ENCODE measurements at regions of chr6 and their contacts with region 1.

Region 1: DNA sequence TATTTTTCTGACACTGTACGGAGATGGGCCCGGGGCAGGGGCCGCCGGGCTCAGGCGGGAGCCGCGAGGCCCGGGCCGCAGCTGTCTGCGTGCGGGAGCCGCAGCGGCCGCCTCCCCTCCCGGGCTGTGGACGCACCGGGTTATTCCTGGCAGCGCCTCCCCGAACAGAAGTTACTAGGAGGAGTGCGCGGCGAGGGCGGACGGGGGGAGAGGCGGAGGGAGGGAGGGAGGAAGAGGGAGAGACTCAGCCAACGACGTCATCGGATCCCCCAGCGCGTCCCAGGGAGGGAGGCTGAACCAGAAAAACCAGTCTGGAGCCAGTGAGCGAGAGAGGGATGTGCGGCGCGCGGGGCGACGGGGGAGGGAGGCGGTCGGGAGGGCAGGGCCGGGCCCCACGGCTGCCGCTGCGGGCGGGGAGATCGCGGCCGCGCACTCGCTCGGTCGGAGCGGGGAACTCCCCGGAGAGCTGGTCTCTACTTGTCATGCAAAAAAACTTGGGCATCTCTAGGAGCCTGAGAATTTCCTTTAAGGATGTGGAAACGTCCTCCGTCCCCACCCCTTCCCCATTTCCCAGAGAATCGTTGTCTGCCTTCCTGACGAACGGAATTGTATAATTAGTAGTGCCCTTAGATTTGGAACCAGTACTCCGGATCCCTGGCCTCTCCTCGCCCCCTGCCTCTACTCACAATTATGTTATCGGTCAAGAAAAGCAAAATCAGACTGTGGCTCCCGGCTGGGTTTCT is 1.4 kb upstream of the HIVEP2 start:
- DNase-seq: peak; percentile 96
- H3K4me3 Mint-ChIP-seq: peak overlapping the region; percentile 96
- H3K27ac Mint-ChIP-seq: peak overlapping the region; percentile 99
- H3K4me1 Mint-ChIP-seq: peaks cover 28% of the 10 kb centered on the region
- H3K27me3 Mint-ChIP-seq: peaks cover 2% of the 10 kb centered on the region

Region 2: DNA sequence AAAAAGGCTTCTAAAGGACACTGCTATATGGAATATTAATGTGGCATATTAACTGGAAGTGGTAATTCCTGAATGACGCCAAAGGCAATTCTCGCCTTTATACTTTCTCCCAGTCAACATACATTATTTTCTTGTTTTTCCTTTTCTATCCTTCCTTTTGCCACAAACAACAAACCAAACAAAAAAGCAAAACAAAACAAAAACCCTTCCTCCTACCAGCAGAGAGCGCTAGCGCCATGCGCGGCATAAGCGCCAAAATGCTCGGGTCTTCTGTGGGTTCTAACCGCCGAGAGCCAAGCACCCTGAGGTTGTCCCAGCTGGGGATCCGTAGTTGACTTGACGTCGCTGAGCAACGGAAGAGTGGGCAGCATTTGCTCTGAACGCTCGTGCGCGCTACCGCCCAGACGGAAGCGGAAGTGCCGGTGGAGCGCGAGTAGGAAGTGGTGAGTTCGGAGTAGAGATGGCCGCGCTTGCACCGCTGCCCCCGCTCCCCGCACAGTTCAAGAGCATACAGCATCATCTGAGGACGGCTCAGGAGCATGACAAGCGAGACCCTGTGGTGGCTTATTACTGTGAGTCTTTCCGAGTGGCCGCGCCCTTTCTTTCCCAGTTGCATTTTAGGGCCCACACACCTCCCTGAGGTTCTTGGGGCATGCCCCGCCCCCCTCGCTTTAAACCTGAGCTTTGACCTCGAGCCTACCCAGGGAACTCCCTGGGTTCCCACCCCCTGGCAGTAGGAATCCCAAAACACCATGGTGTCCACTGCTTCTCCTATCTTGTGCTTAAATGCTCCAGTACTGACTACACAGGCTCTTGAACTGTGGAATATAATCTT is 799.3 kb before region 1 on chr6 and contains the starts of genes NMBR and VTA1:
- CTCF ChIA-PET with region 1: no interaction called
- POLR2A ChIA-PET with region 1: no interaction called
- intact Hi-C with region 1: loop called (anchors 2 kb)
- DNase-seq: peak; percentile 98
- H3K4me3 Mint-ChIP-seq: peak within 1 kb of the TSS; percentile 96
- H3K27ac Mint-ChIP-seq: peak within 1 kb of the TSS; percentile 70
- H3K4me1 Mint-ChIP-seq: peaks cover 51% of the 10 kb centered on the region
- H3K27me3 Mint-ChIP-seq: no peaks in the 10 kb centered on the region
- total RNA-seq, gene NMBR: not detected
- total RNA-seq, gene VTA1: 43.5 to 47.4 TPM

Region 3: DNA sequence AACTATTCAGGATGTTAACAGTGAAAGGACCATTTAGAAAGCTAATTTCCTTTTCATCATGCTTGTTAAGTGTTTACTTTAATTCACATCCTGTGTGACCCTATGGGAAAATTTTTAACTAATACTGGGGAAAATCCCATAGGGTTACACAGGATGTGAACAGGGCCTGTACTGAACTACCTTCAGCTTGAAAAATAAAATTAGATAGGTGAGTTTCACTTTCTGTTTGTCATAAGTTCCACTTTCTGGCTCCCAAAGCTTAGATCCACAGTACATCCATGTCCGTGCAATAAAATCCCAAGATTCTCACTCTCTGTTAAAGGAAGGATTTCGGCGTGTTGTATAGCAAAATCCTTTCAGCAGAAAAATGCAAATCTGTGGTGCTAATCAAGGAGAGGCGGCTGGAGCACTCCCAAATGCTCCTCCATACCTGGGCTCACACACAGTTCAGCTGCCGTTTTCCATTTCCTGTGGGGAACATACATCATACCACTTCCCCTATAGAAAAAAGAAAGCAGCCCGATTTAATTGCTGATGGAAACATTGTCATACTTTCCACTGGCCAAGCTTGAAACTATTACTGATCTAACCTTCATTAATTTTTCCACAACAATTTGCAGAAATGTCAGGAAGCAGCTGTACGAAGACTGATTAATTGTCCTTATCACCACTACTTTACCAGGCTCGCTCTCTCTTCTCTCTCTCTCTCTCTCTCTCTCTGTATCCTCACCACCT is 126.6 kb before region 1 on chr6:
- CTCF ChIA-PET with region 1: interaction called, 3 read pairs
- POLR2A ChIA-PET with region 1: interaction called, 26 read pairs
- intact Hi-C with region 1: loop called (anchors 1 kb)
- DNase-seq: peak; percentile 63
- H3K4me3 Mint-ChIP-seq: peak overlapping the region; percentile 79
- H3K27ac Mint-ChIP-seq: peak overlapping the region; percentile 97
- H3K4me1 Mint-ChIP-seq: peaks cover 77% of the 10 kb centered on the region
- H3K27me3 Mint-ChIP-seq: peaks cover 2% of the 10 kb centered on the region

Region 4: GRCh38 chr6:142902636-142903053 is 43.7 kb before region 1 on chr6:
- CTCF ChIA-PET with region 1: interaction called, 4 read pairs
- POLR2A ChIA-PET with region 1: interaction called, 12 read pairs
- intact Hi-C with region 1: loop called (anchors 1 kb)
- DNase-seq: peak; percentile 87
- H3K4me3 Mint-ChIP-seq: peak overlapping the region; percentile 56
- H3K27ac Mint-ChIP-seq: peak overlapping the region; percentile 87
- H3K4me1 Mint-ChIP-seq: peaks cover 59% of the 10 kb centered on the region
- H3K27me3 Mint-ChIP-seq: no peaks in the 10 kb centered on the region

Region 5: GRCh38 chr6:143060354-143060805 is 114.0 kb after region 1 on chr6:
- CTCF ChIA-PET with region 1: no interaction called
- POLR2A ChIA-PET with region 1: no interaction called
- intact Hi-C with region 1: loop called (anchors 1 kb)
- DNase-seq: peak; percentile 83
- H3K4me3 Mint-ChIP-seq: peak overlapping the region; percentile 89
- H3K27ac Mint-ChIP-seq: peak overlapping the region; percentile 92
- H3K4me1 Mint-ChIP-seq: peaks cover 23% of the 10 kb centered on the region
- H3K27me3 Mint-ChIP-seq: no peaks in the 10 kb centered on the region

Region 6: DNA sequence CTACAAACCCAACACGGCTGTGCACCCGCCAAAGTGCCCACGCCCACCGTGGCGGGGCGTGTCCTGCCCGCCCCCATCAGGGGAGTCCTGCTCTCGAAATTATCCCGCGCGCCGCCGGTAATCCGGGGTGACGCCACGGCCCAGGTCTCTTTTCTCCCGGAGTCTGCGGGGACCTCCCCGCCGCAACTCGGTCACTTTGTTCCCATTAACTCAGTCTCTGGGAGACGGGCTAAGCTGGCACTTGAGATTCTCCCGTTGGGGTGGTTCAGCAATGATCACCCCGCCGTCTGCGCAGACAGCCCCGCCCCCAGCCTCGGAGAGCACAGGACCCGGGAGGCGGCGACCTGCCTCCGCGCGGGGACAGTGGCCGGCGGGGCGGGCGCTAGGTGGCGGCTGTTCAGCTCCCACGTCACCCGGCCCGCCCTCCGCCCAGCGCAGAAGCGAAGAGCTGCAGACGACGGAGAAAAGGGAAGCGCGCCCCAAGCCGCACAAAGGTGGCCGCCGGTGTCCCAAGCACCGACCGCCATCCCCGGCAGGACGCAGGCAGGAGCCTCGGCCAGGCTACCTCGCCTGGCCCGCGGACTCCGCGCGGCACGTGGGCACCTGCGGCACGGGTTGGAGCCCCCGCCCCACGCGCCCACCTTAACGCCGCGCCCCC is 1117.5 kb after region 1 on chr6:
- CTCF ChIA-PET with region 1: no interaction called
- POLR2A ChIA-PET with region 1: no interaction called
- intact Hi-C with region 1: loop called (anchors 10 kb)
- DNase-seq: peak; percentile 91
- H3K4me3 Mint-ChIP-seq: peak overlapping the region; percentile 82
- H3K27ac Mint-ChIP-seq: peak overlapping the region; percentile 67
- H3K4me1 Mint-ChIP-seq: peaks cover 43% of the 10 kb centered on the region
- H3K27me3 Mint-ChIP-seq: no peaks in the 10 kb centered on the region

Measured in activated CD4-positive, alpha-beta memory T cell treated with anti-CD3 and anti-CD28 coated beads for 36 hours (primary cell).